Vagina (tissue), 2 donors: ENCODE measurements at regions of chr5 and their contacts with region 1.

Region 1: DNA sequence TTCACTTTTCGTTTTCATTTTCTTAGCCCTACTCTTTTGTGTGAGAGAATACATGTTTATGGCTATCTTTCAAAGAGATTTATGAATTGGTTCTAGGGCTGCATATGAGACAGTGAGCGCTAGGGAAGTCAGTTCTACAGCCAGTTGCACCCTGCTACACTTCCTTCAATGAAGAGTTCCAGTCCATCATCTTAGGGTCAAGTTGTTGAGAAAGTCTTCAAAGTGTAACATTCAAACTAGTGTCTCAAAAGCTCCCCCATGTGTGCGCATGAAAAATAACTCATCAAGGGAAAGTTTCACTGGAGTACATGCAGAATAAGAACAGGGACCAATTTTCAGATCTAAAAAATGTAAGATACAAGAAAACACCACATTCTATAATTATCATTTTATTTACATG is 317.2 kb downstream of the DEPDC1B start:
- DNase-seq: no peak
- H3K4me3 ChIP-seq: no peak overlapping the region
- H3K27ac ChIP-seq: no peak overlapping the region
- H3K4me1 ChIP-seq: no peaks in the 10 kb centered on the region
- H3K27me3 ChIP-seq: no peaks in the 10 kb centered on the region
- CTCF ChIP-seq: no peak
- POLR2A ChIP-seq: no peak

Region 2: GRCh38 chr5:59810041-59810440 is 572.7 kb before region 1 on chr5:
- intact Hi-C with region 1: loop called (anchors 10 kb)
- DNase-seq: no peak
- H3K4me3 ChIP-seq: no peak overlapping the region
- H3K27ac ChIP-seq: no peak overlapping the region
- H3K4me1 ChIP-seq: no peaks in the 10 kb centered on the region
- H3K27me3 ChIP-seq: no peaks in the 10 kb centered on the region
- CTCF ChIP-seq: peak; percentile 82 to 91 (median 86)
- POLR2A ChIP-seq: no peak

Region 3: GRCh38 chr5:60336491-60336890 is 46.2 kb before region 1 on chr5:
- intact Hi-C with region 1: loop called (anchors 2 kb)
- DNase-seq: no peak
- H3K4me3 ChIP-seq: no peak overlapping the region
- H3K27ac ChIP-seq: no peak overlapping the region
- H3K4me1 ChIP-seq: no peaks in the 10 kb centered on the region
- H3K27me3 ChIP-seq: no peaks in the 10 kb centered on the region
- CTCF ChIP-seq: no peak
- POLR2A ChIP-seq: no peak